PC-3 (cell line): ENCODE measurements at regions of chr11 and their contacts with region 1.

Region 1: GRCh38 chr11:73566422-73566821 is 31.5 kb downstream of the FAM168A start:
- DNase-seq: no peak
- ATAC-seq: no peak
- H3K4me3 ChIP-seq: no peak overlapping the region
- H3K27ac ChIP-seq: no peak overlapping the region
- H3K4me1 ChIP-seq: peaks cover 12% of the 10 kb centered on the region
- H3K27me3 ChIP-seq: no peaks in the 10 kb centered on the region
- CTCF ChIP-seq: no peak

Region 2: GRCh38 chr11:73469401-73469800 is 97.0 kb before region 1 on chr11:
- CTCF ChIA-PET with region 1: no interaction called
- POLR2A ChIA-PET with region 1: no interaction called
- intact Hi-C with region 1: no loop called
- DNase-seq: no peak
- ATAC-seq: no peak
- H3K4me3 ChIP-seq: no peak overlapping the region
- H3K27ac ChIP-seq: no peak overlapping the region
- H3K4me1 ChIP-seq: no peaks in the 10 kb centered on the region
- H3K27me3 ChIP-seq: no peaks in the 10 kb centered on the region
- CTCF ChIP-seq: no peak

Region 3: GRCh38 chr11:73810637-73811036 is 244.2 kb after region 1 on chr11:
- CTCF ChIA-PET with region 1: no interaction called
- POLR2A ChIA-PET with region 1: interaction called, 18 read pairs
- intact Hi-C with region 1: no loop called
- DNase-seq: no peak
- ATAC-seq: no peak
- H3K4me3 ChIP-seq: no peak overlapping the region
- H3K27ac ChIP-seq: no peak overlapping the region
- H3K4me1 ChIP-seq: no peaks in the 10 kb centered on the region
- H3K27me3 ChIP-seq: no peaks in the 10 kb centered on the region
- CTCF ChIP-seq: no peak